Activated B cell treated with CpG ODN at 0.5 μM for 24 hours (primary cell): ENCODE measurements at regions of chr17 and their contacts with region 1.

Region 1: DNA sequence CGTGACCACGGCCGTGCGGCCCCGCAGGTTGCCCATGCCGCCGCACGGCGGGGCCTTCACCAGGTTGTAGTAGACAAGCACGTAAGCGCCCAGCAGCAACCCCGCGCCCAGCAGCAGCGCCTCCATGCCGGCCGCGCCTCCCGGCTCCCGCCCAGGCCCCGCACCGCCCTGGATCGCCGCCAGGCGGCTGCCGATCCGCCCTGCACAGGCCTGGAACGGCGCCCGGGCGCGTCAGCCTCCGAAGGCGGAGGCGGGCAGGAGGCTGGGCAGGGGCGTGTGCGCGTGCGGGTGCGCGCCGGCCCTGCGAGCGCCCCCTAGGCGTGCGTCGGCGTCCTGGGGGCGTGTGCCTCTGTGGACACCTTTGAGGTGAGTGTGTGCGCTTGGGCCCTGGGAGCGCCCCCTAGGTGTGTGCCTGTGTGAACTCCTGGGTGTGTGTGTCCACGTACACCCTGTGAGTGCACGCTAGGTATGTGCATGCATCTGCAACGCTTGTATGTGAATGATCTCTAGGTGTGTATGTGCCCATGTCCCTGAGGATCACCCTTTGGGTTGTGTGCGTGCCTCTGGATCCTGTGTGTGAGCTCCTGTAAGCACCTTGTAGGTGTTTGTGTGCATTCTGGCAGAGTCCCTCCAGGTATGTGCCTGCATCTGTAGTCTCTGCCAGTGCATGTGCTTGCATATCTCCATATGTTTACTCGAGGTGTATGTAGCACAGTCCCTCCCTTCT is at the start of gene DHRS13:
- DNase-seq: peak; percentile 97
- ATAC-seq: peak; percentile 90
- H3K4me3 Mint-ChIP-seq: peak within 1 kb of the TSS; percentile 82
- H3K27ac Mint-ChIP-seq: peak within 1 kb of the TSS; percentile 77
- H3K4me1 Mint-ChIP-seq: peaks cover 37% of the 10 kb centered on the region
- H3K27me3 Mint-ChIP-seq: no peaks in the 10 kb centered on the region
- CTCF ChIP-seq: peak; percentile 82
- total RNA-seq, gene DHRS13: 32.0 and 39.6 TPM in 2 replicates

Region 2: GRCh38 chr17:28661635-28662537 is 241.1 kb before region 1 on chr17 and contains the starts of genes SDF2 and SUPT6H:
- CTCF ChIA-PET with region 1: no interaction called
- POLR2A ChIA-PET with region 1: no interaction called
- intact Hi-C with region 1: loop called (anchors 5 kb)
- DNase-seq: peak; percentile 95
- ATAC-seq: peak; percentile 83
- H3K4me3 Mint-ChIP-seq: peak within 1 kb of the TSS; percentile 98
- H3K27ac Mint-ChIP-seq: peak within 1 kb of the TSS; percentile 100
- H3K4me1 Mint-ChIP-seq: peaks cover 56% of the 10 kb centered on the region
- H3K27me3 Mint-ChIP-seq: no peaks in the 10 kb centered on the region
- CTCF ChIP-seq: no peak
- total RNA-seq, gene SDF2: 36.1 and 47.7 TPM in 2 replicates
- total RNA-seq, gene SUPT6H: 77.1 and 92.4 TPM in 2 replicates

Region 3: DNA sequence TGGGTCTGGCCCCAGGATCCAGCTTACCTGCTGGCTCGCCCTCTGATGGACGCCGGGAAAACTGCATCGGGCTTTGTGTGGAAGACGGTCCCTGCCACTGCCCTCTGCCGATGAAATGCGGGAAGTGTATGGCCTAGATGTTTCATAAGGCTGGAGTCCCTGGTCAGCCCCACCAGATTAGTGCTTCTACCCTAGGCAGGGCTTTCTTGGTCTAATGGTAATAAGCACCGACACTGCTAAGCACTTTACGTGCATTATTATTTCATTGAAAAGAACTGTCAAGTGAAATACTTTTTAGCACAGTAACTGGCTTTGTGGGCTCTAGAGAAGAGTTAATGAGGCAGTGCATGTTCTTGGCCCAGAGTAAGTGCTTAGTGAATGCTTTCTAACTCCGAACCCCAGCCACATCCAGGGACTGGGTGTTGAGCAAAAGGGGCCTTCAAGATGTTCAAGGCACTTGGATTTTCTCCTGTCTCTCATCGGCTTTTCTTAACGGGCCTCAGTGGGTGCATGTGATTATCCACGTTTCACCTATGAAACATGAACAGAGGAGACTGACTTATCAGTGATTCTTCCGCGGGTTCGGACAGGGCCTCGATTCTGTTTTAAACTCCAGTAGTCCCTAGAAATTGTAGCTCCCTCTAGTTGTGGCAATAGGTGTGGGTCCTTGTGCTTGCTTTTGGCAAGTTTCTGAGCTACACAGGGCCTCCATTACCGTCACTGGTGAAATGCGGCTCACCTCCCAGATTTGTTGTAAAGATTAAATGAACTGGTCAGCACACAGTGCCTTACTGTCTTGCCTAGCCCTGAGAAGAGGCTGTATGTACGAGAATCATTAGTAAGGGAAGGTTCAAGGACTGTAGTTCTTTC is 152.6 kb before region 1 on chr17:
- CTCF ChIA-PET with region 1: interaction called, 6 read pairs
- POLR2A ChIA-PET with region 1: interaction called, 15 read pairs
- intact Hi-C with region 1: loop called (anchors 1 kb)
- DNase-seq: peak; percentile 82
- ATAC-seq: peak; percentile 84
- H3K4me3 Mint-ChIP-seq: peak overlapping the region; percentile 75
- H3K27ac Mint-ChIP-seq: peak overlapping the region; percentile 74
- H3K4me1 Mint-ChIP-seq: peaks cover 51% of the 10 kb centered on the region
- H3K27me3 Mint-ChIP-seq: no peaks in the 10 kb centered on the region
- CTCF ChIP-seq: peak; percentile 95

Region 4: GRCh38 chr17:28842282-28843012 is 60.5 kb before region 1 on chr17 and contains the start of gene FAM222B:
- CTCF ChIA-PET with region 1: interaction called, 11 read pairs
- POLR2A ChIA-PET with region 1: interaction called, 20 read pairs
- intact Hi-C with region 1: loop called (anchors 1 kb)
- DNase-seq: peak; percentile 84
- ATAC-seq: peak; percentile 98
- H3K4me3 Mint-ChIP-seq: peak within 1 kb of the TSS; percentile 96
- H3K27ac Mint-ChIP-seq: peak within 1 kb of the TSS; percentile 91
- H3K4me1 Mint-ChIP-seq: peaks cover 24% of the 10 kb centered on the region
- H3K27me3 Mint-ChIP-seq: no peaks in the 10 kb centered on the region
- CTCF ChIP-seq: no peak
- total RNA-seq, gene FAM222B: 15.6 and 16.0 TPM in 2 replicates

Region 5: DNA sequence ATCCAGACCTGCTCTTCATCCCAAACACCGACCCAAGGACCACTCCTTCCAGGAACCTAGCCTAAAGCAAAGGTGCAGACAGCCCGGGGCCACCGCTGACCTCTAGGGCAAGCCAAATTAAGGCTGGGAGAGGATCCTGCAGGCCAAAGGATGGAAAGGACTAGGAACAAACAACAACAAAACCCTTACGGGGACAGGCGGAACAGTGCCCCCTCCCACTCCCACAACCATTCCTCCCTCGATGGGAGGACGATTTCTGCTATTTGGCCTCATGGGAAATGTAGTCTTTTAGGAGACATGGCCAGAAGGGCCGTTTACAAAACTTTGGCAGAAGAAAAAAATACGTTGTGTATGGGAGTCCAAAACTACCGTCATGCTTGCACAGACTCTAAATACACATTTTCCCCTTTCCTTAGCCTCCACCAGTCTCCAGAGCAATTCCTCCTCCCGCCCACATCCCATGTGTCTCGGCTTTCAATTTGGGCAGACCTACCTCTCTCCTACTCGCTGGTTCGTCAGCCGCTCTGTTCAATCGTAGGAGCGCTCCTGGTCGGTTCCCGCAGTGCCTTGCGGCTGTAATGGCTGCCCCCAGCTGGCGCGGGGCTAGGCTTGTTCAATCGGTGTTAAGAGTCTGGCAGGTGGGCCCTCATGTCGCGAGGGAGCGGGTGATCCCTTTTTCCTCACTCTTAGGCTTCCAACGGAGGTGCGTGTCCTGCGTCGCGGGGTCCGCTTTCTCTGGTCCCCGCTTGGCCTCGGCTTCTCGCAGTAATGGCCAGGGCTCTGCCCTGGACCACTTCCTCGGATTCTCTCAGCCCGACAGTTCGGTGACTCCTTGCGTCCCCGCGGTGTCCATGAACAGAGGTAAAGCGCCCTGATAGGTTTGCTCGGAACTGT is 48.3 kb before region 1 on chr17 and contains the start of gene ERAL1:
- CTCF ChIA-PET with region 1: interaction called, 5 read pairs
- POLR2A ChIA-PET with region 1: interaction called, 13 read pairs
- intact Hi-C with region 1: loop called (anchors 1 kb)
- DNase-seq: peak; percentile 67
- ATAC-seq: peak; percentile 99
- H3K4me3 Mint-ChIP-seq: peak within 1 kb of the TSS; percentile 89
- H3K27ac Mint-ChIP-seq: peak within 1 kb of the TSS; percentile 80
- H3K4me1 Mint-ChIP-seq: peaks cover 25% of the 10 kb centered on the region
- H3K27me3 Mint-ChIP-seq: no peaks in the 10 kb centered on the region
- CTCF ChIP-seq: no peak
- total RNA-seq, gene ERAL1: 47.6 and 49.2 TPM in 2 replicates

Region 6: DNA sequence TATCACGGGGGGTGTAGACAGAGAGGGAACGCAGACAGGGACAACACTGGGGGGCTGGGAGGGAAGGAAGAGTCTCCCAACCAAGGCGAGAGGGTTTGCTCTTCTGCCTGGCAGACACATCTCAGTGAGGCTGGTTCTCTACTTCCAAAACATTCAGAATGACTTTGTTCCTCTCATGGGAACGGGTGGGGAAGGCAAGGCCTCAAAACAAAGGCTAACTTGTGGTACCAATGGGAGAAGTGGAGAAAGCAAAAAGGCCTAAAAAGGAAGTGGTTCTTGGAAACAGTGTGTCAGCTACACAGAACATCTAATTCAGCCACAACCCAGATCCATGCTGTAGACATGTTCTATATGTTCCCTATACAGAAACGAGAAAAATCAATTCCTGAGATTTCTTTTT is 13.0 kb before region 1 on chr17:
- CTCF ChIA-PET with region 1: interaction called, 22 read pairs
- POLR2A ChIA-PET with region 1: interaction called, 29 read pairs
- intact Hi-C with region 1: loop called (anchors 1 kb)
- DNase-seq: no peak
- ATAC-seq: no peak
- H3K4me3 Mint-ChIP-seq: peak overlapping the region; percentile 35
- H3K27ac Mint-ChIP-seq: peak overlapping the region; percentile 65
- H3K4me1 Mint-ChIP-seq: peaks cover 86% of the 10 kb centered on the region
- H3K27me3 Mint-ChIP-seq: no peaks in the 10 kb centered on the region
- CTCF ChIP-seq: no peak